ENCODE measurements at regions of chr10 and their contacts with region 1.

Region 1: GRCh38 chr10:69408318-69409175 is 8.2 kb downstream of the TACR2 start:
- DNase-seq: peak; percentile 89 to 91 (median 89)
- H3K4me3 ChIP-seq: peak overlapping the region in 1 of 2 donors; percentile 25
- H3K4me3 Mint-ChIP-seq: peak overlapping the region in 7 of 8 donors; percentile 64 to 82 (median 70)
- H3K27ac ChIP-seq: peak overlapping the region; percentile 61
- H3K27ac Mint-ChIP-seq: peak overlapping the region; percentile 70 to 96 (median 94)
- H3K4me1 ChIP-seq: peaks cover 17% of the 10 kb centered on the region
- H3K4me1 Mint-ChIP-seq: peaks cover 8 to 39% (median 18%) of the 10 kb centered on the region in 4 donors
- H3K27me3 ChIP-seq: no peaks in the 10 kb centered on the region
- H3K27me3 Mint-ChIP-seq: no peaks in the 10 kb centered on the region

Region 2: DNA sequence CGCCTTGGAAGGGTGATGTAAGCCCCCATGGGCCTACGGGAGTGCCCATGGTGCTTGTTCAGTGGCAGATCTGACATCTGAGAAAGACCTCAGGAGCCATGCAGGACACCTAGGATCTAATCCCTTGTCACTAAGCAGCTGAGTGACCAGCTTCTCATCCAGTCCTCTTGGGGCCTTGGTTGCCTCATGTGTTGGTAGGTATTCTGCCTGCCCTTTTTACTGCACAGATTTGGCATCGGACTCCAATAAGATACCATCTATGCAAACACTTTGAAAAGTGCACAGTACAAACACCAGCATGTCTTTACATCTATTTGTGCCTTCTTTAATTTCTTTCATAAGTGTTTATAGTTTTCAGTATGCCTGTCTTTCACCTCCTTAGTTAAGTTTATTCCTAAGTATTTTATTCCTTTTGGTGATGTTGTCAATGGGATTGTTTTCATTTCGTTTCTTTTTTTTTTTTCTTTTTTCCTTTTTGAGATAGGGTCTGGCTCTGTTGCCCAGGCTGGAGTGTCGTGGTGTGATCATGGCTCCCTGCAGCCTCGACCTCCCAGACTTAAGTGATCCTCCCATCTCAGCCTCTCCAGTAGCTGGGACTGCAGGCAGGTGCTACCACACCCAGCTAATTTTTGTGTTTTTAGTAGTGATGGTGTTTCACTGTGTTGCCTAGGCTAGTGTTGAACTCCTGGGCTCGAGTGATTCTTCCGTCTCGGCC is 570.8 kb before region 1 on chr10:
- CTCF ChIA-PET with region 1: no interaction called
- POLR2A ChIA-PET with region 1: no interaction called
- intact Hi-C with region 1: no loop called
- DNase-seq: no peak
- H3K4me3 ChIP-seq: no peak overlapping the region
- H3K4me3 Mint-ChIP-seq: no peak overlapping the region
- H3K27ac ChIP-seq: no peak overlapping the region
- H3K27ac Mint-ChIP-seq: no peak overlapping the region
- H3K4me1 ChIP-seq: no peaks in the 10 kb centered on the region
- H3K4me1 Mint-ChIP-seq: no peaks in the 10 kb centered on the region
- H3K27me3 ChIP-seq: no peaks in the 10 kb centered on the region
- H3K27me3 Mint-ChIP-seq: peaks cover 0 to 1% of the 10 kb centered on the region in 2 donors

Region 3: GRCh38 chr10:69232252-69232651 is 176.3 kb before region 1 on chr10:
- CTCF ChIA-PET with region 1: interaction called, 15 read pairs
- POLR2A ChIA-PET with region 1: interaction called, 3 read pairs
- intact Hi-C with region 1: loop called (anchors 1 kb)
- DNase-seq: no peak
- H3K4me3 ChIP-seq: no peak overlapping the region
- H3K4me3 Mint-ChIP-seq: peak overlapping the region in 5 of 8 donors; percentile 12 to 94 (median 81)
- H3K27ac ChIP-seq: no peak overlapping the region
- H3K27ac Mint-ChIP-seq: peak overlapping the region in 6 of 7 donors; percentile 1 to 93 (median 78)
- H3K4me1 ChIP-seq: peaks cover 55% of the 10 kb centered on the region
- H3K4me1 Mint-ChIP-seq: peaks cover 41 to 71% (median 47%) of the 10 kb centered on the region in 4 donors
- H3K27me3 ChIP-seq: no peaks in the 10 kb centered on the region
- H3K27me3 Mint-ChIP-seq: no peaks in the 10 kb centered on the region

Region 4: DNA sequence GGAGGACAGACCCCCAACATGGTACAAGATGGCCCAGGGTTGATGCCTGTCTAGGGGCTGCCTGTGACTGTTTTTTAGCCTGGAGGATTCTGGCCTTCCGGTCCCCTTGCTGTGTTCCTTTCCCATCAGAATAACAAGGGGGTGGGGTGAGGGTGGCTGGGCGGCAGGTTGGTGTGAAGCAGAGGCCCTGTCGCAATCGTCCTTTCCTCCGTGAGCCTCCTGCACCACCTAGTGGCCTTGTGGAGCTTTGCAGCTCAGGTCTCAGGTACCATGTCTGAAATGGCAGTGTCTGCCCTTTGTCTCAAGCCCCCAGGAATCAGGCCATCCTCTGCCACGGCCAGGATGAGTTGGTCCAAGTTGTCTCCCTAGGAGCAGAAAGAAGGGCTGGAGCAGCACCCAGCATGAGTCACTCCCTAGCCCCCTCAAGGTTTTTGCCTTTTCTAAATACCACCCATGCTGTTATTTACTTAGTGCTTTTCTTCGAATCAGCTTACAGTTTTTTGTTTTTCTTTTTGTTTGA is 16.0 kb before region 1 on chr10:
- CTCF ChIA-PET with region 1: interaction called, 23 read pairs
- POLR2A ChIA-PET with region 1: interaction called, 4 read pairs
- intact Hi-C with region 1: loop called (anchors 1 kb)
- DNase-seq: peak; percentile 79 to 81 (median 80)
- H3K4me3 ChIP-seq: no peak overlapping the region
- H3K4me3 Mint-ChIP-seq: no peak overlapping the region
- H3K27ac ChIP-seq: peak overlapping the region; percentile 22
- H3K27ac Mint-ChIP-seq: peak overlapping the region; percentile 41 to 91 (median 79)
- H3K4me1 ChIP-seq: peaks cover 15% of the 10 kb centered on the region
- H3K4me1 Mint-ChIP-seq: peaks cover 7 to 17% (median 11%) of the 10 kb centered on the region in 4 donors
- H3K27me3 ChIP-seq: no peaks in the 10 kb centered on the region
- H3K27me3 Mint-ChIP-seq: no peaks in the 10 kb centered on the region

Region 5: GRCh38 chr10:69451209-69451783 is 42.7 kb after region 1 on chr10 and contains the start of gene TSPAN15:
- CTCF ChIA-PET with region 1: interaction called, 31 read pairs
- POLR2A ChIA-PET with region 1: interaction called, 6 read pairs
- intact Hi-C with region 1: loop called (anchors 1 kb)
- DNase-seq: peak; percentile 80 to 83 (median 82)
- H3K4me3 ChIP-seq: peak within 1 kb of the TSS in 1 of 2 donors; percentile 73
- H3K4me3 Mint-ChIP-seq: peak within 1 kb of the TSS; percentile 86 to 95 (median 90)
- H3K27ac ChIP-seq: peak within 1 kb of the TSS; percentile 49
- H3K27ac Mint-ChIP-seq: peak within 1 kb of the TSS; percentile 39 to 89 (median 70)
- H3K4me1 ChIP-seq: peaks cover 26% of the 10 kb centered on the region
- H3K4me1 Mint-ChIP-seq: peaks cover 12 to 35% (median 22%) of the 10 kb centered on the region in 4 donors
- H3K27me3 ChIP-seq: no peaks in the 10 kb centered on the region
- H3K27me3 Mint-ChIP-seq: no peaks in the 10 kb centered on the region
- total RNA-seq, gene TSPAN15: 2.4 to 2.8 TPM

Region 6: GRCh38 chr10:69629897-69630650 is 221.5 kb after region 1 on chr10 and contains the start of gene FAM241B:
- CTCF ChIA-PET with region 1: interaction called, 5 read pairs
- POLR2A ChIA-PET with region 1: no interaction called
- intact Hi-C with region 1: loop called (anchors 2 kb)
- DNase-seq: peak; percentile 75 to 81 (median 78)
- H3K4me3 ChIP-seq: peak within 1 kb of the TSS; percentile 49 to 69
- H3K4me3 Mint-ChIP-seq: peak within 1 kb of the TSS; percentile 63 to 81 (median 78)
- H3K27ac ChIP-seq: peak within 1 kb of the TSS; percentile 26
- H3K27ac Mint-ChIP-seq: peak within 1 kb of the TSS; percentile 51 to 81 (median 70)
- H3K4me1 ChIP-seq: peaks cover 25% of the 10 kb centered on the region
- H3K4me1 Mint-ChIP-seq: peaks cover 14 to 22% (median 18%) of the 10 kb centered on the region in 4 donors
- H3K27me3 ChIP-seq: no peaks in the 10 kb centered on the region
- H3K27me3 Mint-ChIP-seq: no peaks in the 10 kb centered on the region
- total RNA-seq, gene FAM241B: 9.4 to 10.7 TPM

Measured in CD4-positive, alpha-beta memory T cell (primary cell).